HEK293T (cell line): ENCODE measurements at regions of chr15 and their contacts with region 1.

Region 1: DNA sequence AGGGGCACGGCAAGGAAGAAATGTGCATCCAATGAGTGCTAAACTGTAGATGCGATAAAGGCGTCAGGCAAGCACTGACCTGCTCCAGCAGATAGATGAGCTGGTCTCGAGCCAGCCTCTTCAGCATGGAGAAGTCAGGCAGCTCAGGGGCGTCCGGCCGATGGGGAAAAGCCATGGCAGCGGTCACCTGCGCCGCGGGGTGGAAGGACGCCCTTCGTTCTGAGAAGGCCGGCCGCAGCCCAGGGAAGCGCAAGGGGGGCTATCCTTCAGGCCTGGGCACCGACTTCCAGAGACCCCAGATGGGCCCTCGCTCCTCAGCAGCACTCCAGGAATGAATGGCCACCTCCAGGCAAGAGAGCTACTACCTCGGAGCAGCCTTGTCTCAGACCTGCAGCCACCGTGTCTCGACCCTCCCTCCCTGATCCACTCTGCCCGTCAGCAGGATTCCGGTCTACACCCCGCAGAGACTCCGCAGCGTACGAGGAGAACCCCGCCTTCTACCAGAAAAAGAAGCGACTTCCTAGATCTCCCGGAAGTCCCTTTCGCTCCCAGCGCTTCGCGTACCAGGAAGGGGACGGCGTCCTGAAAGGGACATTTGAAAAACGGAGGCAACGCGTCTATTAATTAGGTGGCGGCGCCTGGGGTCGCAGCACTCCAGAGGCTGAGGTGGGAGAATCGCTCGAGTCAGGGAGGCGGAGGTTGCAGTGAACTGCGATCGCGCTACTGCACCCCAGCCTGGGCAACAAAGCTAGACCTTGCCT is at the start of gene VPS33B:
- DNase-seq: peak; percentile 80

Region 2: DNA sequence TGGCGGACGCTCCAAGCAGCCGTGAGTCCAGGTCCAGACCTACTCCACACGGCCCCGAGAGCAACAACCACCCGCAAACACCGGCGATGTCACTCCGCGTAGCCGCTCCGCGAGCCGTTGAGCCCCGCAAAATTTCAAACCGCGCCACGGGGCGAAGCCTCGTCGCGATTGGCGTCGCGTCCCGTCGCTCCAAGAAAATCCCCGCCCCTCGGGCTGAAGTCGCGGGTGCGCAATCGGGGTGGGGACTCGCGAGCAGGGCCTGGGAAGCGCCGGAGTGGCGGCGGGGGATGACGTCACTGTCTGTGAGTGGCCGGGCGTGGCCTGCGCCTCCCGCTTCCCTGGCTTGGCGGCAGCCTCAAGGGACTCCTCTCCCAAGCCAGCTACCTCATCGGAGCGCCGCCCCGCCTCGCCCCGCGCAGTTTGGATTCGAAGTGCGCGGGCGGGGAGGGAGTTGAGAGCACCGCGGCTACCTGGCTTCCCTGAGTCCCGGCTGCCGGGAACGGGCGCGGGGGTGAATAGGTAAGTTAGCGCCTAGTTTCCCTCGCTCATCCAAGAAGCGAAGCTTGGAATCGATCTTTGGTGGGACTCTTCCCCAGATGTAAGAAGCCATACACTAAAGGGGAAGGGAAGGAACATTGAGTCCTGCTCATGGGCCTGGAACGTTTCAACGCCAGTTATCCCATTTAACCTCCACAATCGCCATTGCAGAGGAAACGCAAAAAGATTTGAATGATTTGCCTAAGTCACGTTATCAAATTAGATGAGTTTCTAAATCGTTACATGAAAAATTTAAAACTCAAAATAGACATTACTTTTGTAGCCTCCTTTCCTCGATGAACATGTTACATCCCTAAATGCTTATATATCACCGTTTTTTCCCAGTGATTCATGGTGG is 27.6 kb before region 1 on chr15 and contains the start of gene PRC1:
- CTCF ChIA-PET with region 1: interaction called, 5 read pairs
- POLR2A ChIA-PET with region 1: interaction called, 12 read pairs
- DNase-seq: peak; percentile 100

Region 3: GRCh38 chr15:91032919-91033803 is 10.9 kb after region 1 on chr15:
- CTCF ChIA-PET with region 1: interaction called, 13 read pairs
- POLR2A ChIA-PET with region 1: interaction called, 10 read pairs
- DNase-seq: peak; percentile 48

Region 4: DNA sequence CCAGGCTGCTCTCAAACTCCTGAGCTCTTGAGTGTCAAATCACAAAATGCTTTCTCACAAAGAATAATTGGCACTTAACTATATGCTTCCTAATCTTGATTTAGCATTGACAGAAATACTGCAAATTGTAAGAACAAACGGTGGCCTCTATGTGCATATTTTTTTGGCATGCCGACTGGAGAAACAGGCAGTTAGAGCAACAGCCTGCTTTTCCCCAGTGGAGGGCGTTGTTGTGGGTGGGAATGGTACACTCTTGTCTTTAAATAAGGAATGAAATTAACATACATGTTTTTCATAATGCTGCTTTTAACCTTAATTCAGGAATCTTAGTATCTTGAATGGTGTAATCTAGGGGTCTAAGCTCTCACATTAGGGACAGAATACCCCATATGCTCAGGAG is 46.7 kb after region 1 on chr15:
- CTCF ChIA-PET with region 1: no interaction called
- POLR2A ChIA-PET with region 1: no interaction called
- DNase-seq: no peak